ENCODE measurements at regions of chr19 and their contacts with region 1.

Region 1: GRCh38 chr19:17496337-17496997 is 15.0 kb upstream of the PGLS start:
- DNase-seq: peak; percentile 76
- ATAC-seq: peak; percentile 100
- H3K4me3 Mint-ChIP-seq: no peak overlapping the region
- H3K27ac Mint-ChIP-seq: no peak overlapping the region
- H3K4me1 Mint-ChIP-seq: peaks cover 27% of the 10 kb centered on the region
- H3K27me3 Mint-ChIP-seq: no peaks in the 10 kb centered on the region
- CTCF ChIP-seq: no peak

Region 2: DNA sequence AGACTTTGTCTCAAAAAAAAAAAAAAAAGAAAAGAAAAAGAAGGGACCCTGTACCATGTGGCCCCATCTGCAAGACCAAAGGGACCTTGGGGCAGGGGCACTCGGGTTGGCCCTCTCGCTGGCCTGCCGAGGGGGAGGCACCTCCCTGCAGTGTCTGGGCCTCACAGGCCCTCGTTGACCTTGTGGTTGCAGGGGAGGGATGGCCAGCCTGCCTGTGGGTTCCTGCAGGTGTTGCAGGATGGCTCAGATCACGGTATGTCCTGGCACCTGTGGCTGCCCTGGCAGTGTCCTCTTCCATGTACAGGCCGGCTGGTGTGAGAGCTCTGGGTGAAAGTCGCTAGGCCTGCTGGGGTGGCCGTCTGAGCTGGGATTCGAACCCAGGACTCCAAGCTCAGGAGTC is 10.3 kb after region 1 on chr19:
- CTCF ChIA-PET with region 1: interaction called, 14 read pairs
- POLR2A ChIA-PET with region 1: interaction called, 18 read pairs
- intact Hi-C with region 1: loop called (anchors 1 kb)
- DNase-seq: no peak
- ATAC-seq: no peak
- H3K4me3 Mint-ChIP-seq: no peak overlapping the region
- H3K27ac Mint-ChIP-seq: no peak overlapping the region
- H3K4me1 Mint-ChIP-seq: peaks cover 30% of the 10 kb centered on the region
- H3K27me3 Mint-ChIP-seq: no peaks in the 10 kb centered on the region
- CTCF ChIP-seq: no peak

Region 3: GRCh38 chr19:17522988-17523872 is 26.8 kb after region 1 on chr19:
- CTCF ChIA-PET with region 1: interaction called, 13 read pairs
- POLR2A ChIA-PET with region 1: interaction called, 11 read pairs
- intact Hi-C with region 1: loop called (anchors 1 kb)
- DNase-seq: peak; percentile 79
- ATAC-seq: peak; percentile 77
- H3K4me3 Mint-ChIP-seq: peak overlapping the region; percentile 76
- H3K27ac Mint-ChIP-seq: peak overlapping the region; percentile 94
- H3K4me1 Mint-ChIP-seq: peaks cover 67% of the 10 kb centered on the region
- H3K27me3 Mint-ChIP-seq: no peaks in the 10 kb centered on the region
- CTCF ChIP-seq: no peak

Region 4: GRCh38 chr19:17539238-17540117 is 43.0 kb after region 1 on chr19:
- CTCF ChIA-PET with region 1: interaction called, 11 read pairs
- POLR2A ChIA-PET with region 1: interaction called, 6 read pairs
- intact Hi-C with region 1: loop called (anchors 1 kb)
- DNase-seq: peak; percentile 96
- ATAC-seq: peak; percentile 86
- H3K4me3 Mint-ChIP-seq: peak overlapping the region; percentile 84
- H3K27ac Mint-ChIP-seq: peak overlapping the region; percentile 90
- H3K4me1 Mint-ChIP-seq: peaks cover 56% of the 10 kb centered on the region
- H3K27me3 Mint-ChIP-seq: no peaks in the 10 kb centered on the region
- CTCF ChIP-seq: no peak

Region 5: DNA sequence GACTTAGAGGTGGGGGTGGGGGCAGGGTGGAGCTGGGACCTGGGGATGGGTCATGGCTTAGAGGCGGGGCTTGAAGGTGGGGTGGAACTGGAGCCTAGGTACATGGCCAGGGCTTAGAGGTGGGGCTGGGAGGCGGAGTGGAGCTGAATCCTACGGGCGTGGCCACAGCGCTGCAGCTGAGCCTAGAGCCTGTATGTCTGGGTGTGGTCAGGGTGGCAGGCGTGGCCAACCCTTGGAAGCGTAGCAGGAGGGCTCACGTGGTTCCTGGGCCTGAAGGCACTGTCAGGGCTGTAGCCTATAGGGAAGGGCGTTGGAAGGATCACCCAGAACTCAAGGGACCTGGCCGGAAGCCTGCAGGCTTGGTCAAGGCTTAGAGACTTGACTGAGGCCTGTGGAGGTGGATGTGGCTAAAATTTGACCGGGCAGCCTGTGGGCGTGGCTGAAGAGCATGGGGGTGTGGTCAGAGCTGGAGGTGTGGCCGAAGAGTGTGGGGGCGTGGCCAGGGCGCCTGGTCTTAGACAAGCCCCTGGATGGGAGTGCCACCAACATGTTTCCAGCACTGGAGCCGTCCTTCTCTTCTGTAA is 83.3 kb after region 1 on chr19:
- CTCF ChIA-PET with region 1: interaction called, 37 read pairs
- POLR2A ChIA-PET with region 1: no interaction called
- intact Hi-C with region 1: loop called (anchors 1 kb)
- DNase-seq: peak; percentile 36
- ATAC-seq: peak; percentile 74
- H3K4me3 Mint-ChIP-seq: no peak overlapping the region
- H3K27ac Mint-ChIP-seq: no peak overlapping the region
- H3K4me1 Mint-ChIP-seq: peaks cover 9% of the 10 kb centered on the region
- H3K27me3 Mint-ChIP-seq: no peaks in the 10 kb centered on the region
- CTCF ChIP-seq: no peak